ENCODE measurements at regions of chr6 and their contacts with region 1.

Region 1: GRCh38 chr6:127971945-127972391 is 71.1 kb upstream of the THEMIS start:
- DNase-seq: peak in 1 of 2 donors; percentile 88
- ATAC-seq: peak; percentile 82 to 84 (median 82)
- H3K4me3 ChIP-seq: peak overlapping the region; percentile 14
- H3K4me3 Mint-ChIP-seq: peak overlapping the region; percentile 79
- H3K27ac ChIP-seq: peak overlapping the region; percentile 40
- H3K27ac Mint-ChIP-seq: peak overlapping the region; percentile 69 to 87
- H3K4me1 ChIP-seq: no peaks in the 10 kb centered on the region
- H3K4me1 Mint-ChIP-seq: peaks cover 29 to 35% of the 10 kb centered on the region in 2 donors
- H3K27me3 ChIP-seq: no peaks in the 10 kb centered on the region
- H3K27me3 Mint-ChIP-seq: no peaks in the 10 kb centered on the region
- CTCF ChIP-seq: no peak

Region 2: DNA sequence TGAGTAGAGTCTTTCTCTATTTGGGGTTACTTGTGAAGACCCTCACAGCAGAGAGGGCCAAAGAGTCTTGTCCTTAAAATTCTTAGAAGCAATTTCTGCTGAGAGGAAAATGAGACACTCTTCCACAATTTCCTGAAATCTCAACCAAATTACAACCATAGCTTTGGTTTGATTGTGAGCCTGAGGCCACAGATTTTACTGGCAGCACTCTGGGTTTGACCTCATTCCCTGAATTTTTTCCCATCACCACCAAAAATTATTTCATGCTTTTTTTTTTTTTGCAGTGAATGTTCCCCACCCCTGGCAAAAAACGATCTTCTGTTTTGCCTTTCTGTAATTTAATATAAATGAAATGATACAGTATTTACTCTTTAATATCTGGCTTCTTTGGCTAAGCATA is 196.6 kb before region 1 on chr6:
- intact Hi-C with region 1: no loop called
- DNase-seq: no peak
- ATAC-seq: no peak
- H3K4me3 ChIP-seq: no peak overlapping the region
- H3K4me3 Mint-ChIP-seq: no peak overlapping the region
- H3K27ac ChIP-seq: no peak overlapping the region
- H3K27ac Mint-ChIP-seq: no peak overlapping the region
- H3K4me1 ChIP-seq: no peaks in the 10 kb centered on the region
- H3K4me1 Mint-ChIP-seq: no peaks in the 10 kb centered on the region
- H3K27me3 ChIP-seq: no peaks in the 10 kb centered on the region
- H3K27me3 Mint-ChIP-seq: no peaks in the 10 kb centered on the region
- CTCF ChIP-seq: no peak

Region 3: GRCh38 chr6:127855542-127856159 is 116.3 kb before region 1 on chr6:
- intact Hi-C with region 1: loop called (anchors 10 kb)
- DNase-seq: peak in 1 of 2 donors; percentile 78
- ATAC-seq: no peak
- H3K4me3 ChIP-seq: no peak overlapping the region
- H3K4me3 Mint-ChIP-seq: no peak overlapping the region
- H3K27ac ChIP-seq: no peak overlapping the region
- H3K27ac Mint-ChIP-seq: no peak overlapping the region
- H3K4me1 ChIP-seq: no peaks in the 10 kb centered on the region
- H3K4me1 Mint-ChIP-seq: peaks cover 4 to 6% of the 10 kb centered on the region in 2 donors
- H3K27me3 ChIP-seq: no peaks in the 10 kb centered on the region
- H3K27me3 Mint-ChIP-seq: peaks cover 0 to 3% of the 10 kb centered on the region in 2 donors
- CTCF ChIP-seq: peak; percentile 65

Region 4: DNA sequence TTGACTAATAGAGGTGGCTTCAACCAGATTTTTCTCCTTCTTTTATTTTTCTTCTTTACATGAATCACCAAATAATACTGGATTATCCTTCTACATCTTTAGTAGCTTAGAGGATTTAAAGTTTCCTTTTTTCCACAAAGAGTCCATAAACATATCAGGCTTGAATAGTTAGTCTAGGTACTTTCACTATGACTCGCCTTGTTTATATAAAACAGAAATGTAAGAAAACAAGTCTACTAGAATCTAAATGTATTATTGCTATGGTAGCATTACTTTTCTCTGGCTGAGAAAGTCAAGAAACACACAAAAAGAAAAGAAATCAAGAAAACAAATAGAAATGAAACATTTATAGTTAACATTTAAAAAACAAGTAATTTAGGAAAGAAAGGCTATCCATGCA is 333.3 kb after region 1 on chr6:
- intact Hi-C with region 1: loop called (anchors 5 kb)
- DNase-seq: no peak
- ATAC-seq: no peak
- H3K4me3 ChIP-seq: no peak overlapping the region
- H3K4me3 Mint-ChIP-seq: no peak overlapping the region
- H3K27ac ChIP-seq: no peak overlapping the region
- H3K27ac Mint-ChIP-seq: no peak overlapping the region
- H3K4me1 ChIP-seq: no peaks in the 10 kb centered on the region
- H3K4me1 Mint-ChIP-seq: no peaks in the 10 kb centered on the region
- H3K27me3 ChIP-seq: no peaks in the 10 kb centered on the region
- H3K27me3 Mint-ChIP-seq: no peaks in the 10 kb centered on the region
- CTCF ChIP-seq: no peak